MCF 10A (cell line): ENCODE measurements at regions of chr5 and their contacts with region 1.

Region 1: GRCh38 chr5:159003037-159004030 is 96.4 kb downstream of the EBF1 start:
- DNase-seq: peak; percentile 91
- H3K4me3 Mint-ChIP-seq: peak overlapping the region; percentile 3
- H3K27ac Mint-ChIP-seq: peak overlapping the region; percentile 97
- H3K4me1 Mint-ChIP-seq: peaks cover 35% of the 10 kb centered on the region
- H3K27me3 Mint-ChIP-seq: no peaks in the 10 kb centered on the region
- CTCF ChIP-seq: no peak

Region 2: DNA sequence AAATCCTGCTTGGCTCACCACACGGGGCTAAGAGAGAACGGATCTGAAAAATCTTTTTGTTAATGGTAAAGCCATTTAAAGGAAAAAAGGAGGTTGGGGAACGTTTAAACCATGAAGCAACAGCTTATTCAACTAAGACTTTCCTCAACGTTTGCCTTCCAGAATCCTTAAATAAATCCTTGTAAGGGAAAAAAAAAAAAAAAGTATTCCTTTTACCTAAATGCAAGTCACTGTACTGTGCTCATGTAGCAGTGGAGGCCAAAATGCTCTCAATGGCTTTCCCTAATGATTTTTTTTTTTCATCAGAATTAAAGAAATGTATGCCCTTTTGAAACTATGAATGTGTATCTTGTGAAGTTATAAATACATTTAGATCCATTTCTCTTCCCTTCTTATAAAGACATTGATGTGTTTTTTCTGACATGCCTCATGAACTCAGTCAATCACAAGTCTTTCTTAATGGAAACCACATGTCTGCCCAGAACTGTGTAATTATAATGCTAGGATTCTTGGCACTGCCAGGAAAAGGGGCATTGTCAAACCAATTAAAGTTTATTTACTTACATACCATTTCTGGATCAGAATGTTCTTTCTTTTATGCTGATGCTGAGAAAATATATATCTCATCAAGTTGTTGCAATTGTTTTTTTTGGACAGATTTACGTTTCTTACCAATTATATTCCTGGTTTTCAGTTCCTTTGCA is 11.1 kb before region 1 on chr5:
- CTCF ChIA-PET with region 1: interaction called, 14 read pairs
- POLR2A ChIA-PET with region 1: interaction called, 82 read pairs
- intact Hi-C with region 1: loop called (anchors 1 kb)
- DNase-seq: peak; percentile 92
- H3K4me3 Mint-ChIP-seq: no peak overlapping the region
- H3K27ac Mint-ChIP-seq: peak overlapping the region; percentile 57
- H3K4me1 Mint-ChIP-seq: peaks cover 50% of the 10 kb centered on the region
- H3K27me3 Mint-ChIP-seq: no peaks in the 10 kb centered on the region
- CTCF ChIP-seq: no peak

Region 3: DNA sequence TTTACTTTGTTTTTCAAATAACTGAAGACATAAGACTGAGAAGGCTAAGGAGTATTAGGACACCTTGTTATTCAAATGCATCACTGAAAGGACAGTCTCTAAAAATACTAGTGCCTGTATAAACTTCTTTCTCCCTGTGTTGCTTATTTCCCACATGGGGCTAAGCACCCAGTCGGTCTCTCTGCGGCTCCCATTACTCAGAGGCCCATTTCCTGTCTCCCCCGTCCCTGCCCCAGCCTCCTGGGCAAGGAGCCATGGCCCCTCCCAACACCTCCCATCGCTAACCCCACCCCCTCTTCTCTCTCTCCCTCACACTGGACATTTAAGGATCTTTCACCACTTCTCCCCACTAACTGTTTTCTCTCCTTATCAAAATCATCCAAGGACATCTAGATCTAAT is 14.5 kb after region 1 on chr5:
- CTCF ChIA-PET with region 1: interaction called, 4 read pairs
- POLR2A ChIA-PET with region 1: interaction called, 20 read pairs
- intact Hi-C with region 1: no loop called
- DNase-seq: peak; percentile 95
- H3K4me3 Mint-ChIP-seq: no peak overlapping the region
- H3K27ac Mint-ChIP-seq: peak overlapping the region; percentile 0
- H3K4me1 Mint-ChIP-seq: peaks cover 22% of the 10 kb centered on the region
- H3K27me3 Mint-ChIP-seq: no peaks in the 10 kb centered on the region
- CTCF ChIP-seq: no peak

Region 4: GRCh38 chr5:159049844-159050315 is 46.5 kb after region 1 on chr5:
- CTCF ChIA-PET with region 1: no interaction called
- POLR2A ChIA-PET with region 1: no interaction called
- intact Hi-C with region 1: loop called (anchors 5 kb)
- DNase-seq: peak; percentile 40
- H3K4me3 Mint-ChIP-seq: no peak overlapping the region
- H3K27ac Mint-ChIP-seq: no peak overlapping the region
- H3K4me1 Mint-ChIP-seq: peaks cover 12% of the 10 kb centered on the region
- H3K27me3 Mint-ChIP-seq: peaks cover 15% of the 10 kb centered on the region
- CTCF ChIP-seq: peak; percentile 27